Breast epithelium (tissue), 4 donors: ENCODE measurements at regions of chr2 and their contacts with region 1.

Region 1: GRCh38 chr2:72859831-72860262 is 27.4 kb upstream of the SPR start:
- DNase-seq: peak in 1 of 2 donors; percentile 48
- H3K4me3 ChIP-seq: no peak overlapping the region
- H3K27ac ChIP-seq: no peak overlapping the region
- H3K4me1 ChIP-seq: no peaks in the 10 kb centered on the region
- H3K27me3 ChIP-seq: peaks cover 0 to 23% of the 10 kb centered on the region in 2 donors
- CTCF ChIP-seq: peak in 2 of 3 donors; percentile 41 to 55
- POLR2A ChIP-seq: no peak

Region 2: DNA sequence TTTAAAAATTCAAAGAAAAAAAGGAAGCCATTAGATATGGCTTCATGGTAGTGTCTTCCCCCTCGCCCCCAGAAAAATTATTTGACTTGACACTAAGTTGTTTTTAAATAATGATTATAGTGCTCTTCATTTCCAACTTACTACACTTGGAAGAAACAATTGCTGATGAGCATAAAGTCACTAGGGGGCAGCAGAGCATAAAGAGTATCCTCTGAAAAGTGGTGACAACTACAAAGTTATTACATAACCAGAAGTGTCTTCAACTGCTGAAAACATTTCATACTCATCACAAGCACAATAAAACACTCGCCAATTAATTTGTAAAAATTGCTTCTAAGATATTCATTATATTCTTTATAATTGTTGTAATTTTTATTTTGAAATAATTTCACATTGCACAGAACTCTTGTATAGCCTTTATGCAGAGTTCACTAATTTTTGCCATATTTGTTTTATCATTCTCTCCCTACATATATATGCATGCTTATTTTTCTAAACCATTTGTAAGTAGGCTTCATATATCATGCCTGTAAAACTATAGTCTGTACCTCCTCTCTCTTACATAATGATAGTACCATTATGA is 88.9 kb before region 1 on chr2:
- intact Hi-C with region 1: loop called (anchors 10 kb)
- DNase-seq: no peak
- H3K4me3 ChIP-seq: no peak overlapping the region
- H3K27ac ChIP-seq: no peak overlapping the region
- H3K4me1 ChIP-seq: no peaks in the 10 kb centered on the region
- H3K27me3 ChIP-seq: no peaks in the 10 kb centered on the region
- CTCF ChIP-seq: peak; percentile 68 to 87 (median 70)
- POLR2A ChIP-seq: no peak

Region 3: GRCh38 chr2:72827999-72828646 is 31.7 kb before region 1 on chr2:
- intact Hi-C with region 1: loop called (anchors 1 kb)
- DNase-seq: no peak
- H3K4me3 ChIP-seq: no peak overlapping the region
- H3K27ac ChIP-seq: no peak overlapping the region
- H3K4me1 ChIP-seq: peaks cover 0 to 7% of the 10 kb centered on the region in 2 donors
- H3K27me3 ChIP-seq: no peaks in the 10 kb centered on the region
- CTCF ChIP-seq: no peak
- POLR2A ChIP-seq: no peak

Region 4: GRCh38 chr2:72901426-72901825 is 41.6 kb after region 1 on chr2:
- intact Hi-C with region 1: no loop called
- DNase-seq: no peak
- H3K4me3 ChIP-seq: no peak overlapping the region
- H3K27ac ChIP-seq: no peak overlapping the region
- H3K4me1 ChIP-seq: no peaks in the 10 kb centered on the region
- H3K27me3 ChIP-seq: peaks cover 0 to 27% of the 10 kb centered on the region in 2 donors
- CTCF ChIP-seq: no peak
- POLR2A ChIP-seq: no peak